Thyroid gland (tissue), 4 donors: ENCODE measurements at regions of chr19 and their contacts with region 1.

Region 1: GRCh38 chr19:46288896-46289588 is 7.8 kb upstream of the HIF3A start:
- DNase-seq: peak in 1 of 2 donors; percentile 19
- H3K4me3 ChIP-seq: no peak overlapping the region
- H3K27ac ChIP-seq: peak overlapping the region in 2 of 3 donors; percentile 10 to 40
- H3K4me1 ChIP-seq: no peaks in the 10 kb centered on the region
- H3K27me3 ChIP-seq: no peaks in the 10 kb centered on the region
- CTCF ChIP-seq: no peak
- POLR2A ChIP-seq: no peak

Region 2: GRCh38 chr19:46239193-46240024 is 49.6 kb before region 1 on chr19:
- intact Hi-C with region 1: no loop called
- DNase-seq: no peak
- H3K4me3 ChIP-seq: no peak overlapping the region
- H3K27ac ChIP-seq: no peak overlapping the region
- H3K4me1 ChIP-seq: no peaks in the 10 kb centered on the region
- H3K27me3 ChIP-seq: peaks cover 3% of the 10 kb centered on the region
- CTCF ChIP-seq: no peak
- POLR2A ChIP-seq: no peak

Region 3: DNA sequence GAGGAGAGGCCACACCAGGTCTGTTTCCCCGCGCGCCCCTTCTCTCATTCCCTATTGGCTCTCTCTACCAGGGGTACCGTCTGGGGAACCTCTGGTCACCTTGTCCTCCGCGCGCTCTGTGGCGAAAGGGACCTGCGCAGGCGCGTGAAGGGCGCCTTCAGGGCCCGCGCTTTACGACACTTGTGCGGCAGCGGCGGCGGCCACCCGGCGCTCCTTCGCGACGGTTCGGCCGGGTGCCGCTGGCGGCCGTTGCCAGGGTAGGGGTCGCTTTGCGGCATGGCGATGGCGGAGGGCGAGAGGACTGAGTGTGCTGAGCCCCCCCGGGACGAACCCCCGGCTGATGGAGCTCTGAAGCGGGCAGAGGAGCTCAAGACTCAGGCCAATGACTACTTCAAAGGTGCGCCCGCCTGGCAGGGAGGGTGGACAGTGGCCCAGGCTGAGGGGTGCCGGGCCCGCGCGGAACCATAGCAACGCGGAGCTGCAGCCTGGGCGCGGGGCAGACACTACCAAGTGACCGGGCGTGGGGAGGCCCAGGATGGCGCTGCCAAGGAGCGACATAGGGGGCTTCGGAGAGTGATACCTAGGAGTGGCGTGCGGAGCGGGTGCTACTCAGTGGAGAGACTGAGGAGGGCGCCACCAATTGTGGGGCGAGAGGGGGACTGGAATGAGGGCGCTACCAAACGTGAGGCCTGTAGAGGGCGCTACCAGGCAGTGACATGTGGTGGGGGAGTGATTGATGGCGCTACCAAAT is 58.0 kb after region 1 on chr19 and contains the start of gene PPP5C:
- intact Hi-C with region 1: loop called (anchors 10 kb)
- DNase-seq: peak; percentile 94
- H3K4me3 ChIP-seq: peak within 1 kb of the TSS; percentile 76 to 90 (median 85)
- H3K27ac ChIP-seq: peak within 1 kb of the TSS; percentile 53 to 90 (median 85)
- H3K4me1 ChIP-seq: peaks cover 45 to 51% of the 10 kb centered on the region in 2 donors
- H3K27me3 ChIP-seq: no peaks in the 10 kb centered on the region
- CTCF ChIP-seq: peak; percentile 33 to 83 (median 66)
- POLR2A ChIP-seq: peak in 1 of 2 donors; percentile 81
- total RNA-seq, gene PPP5C: 63.3 to 112 (median 80.7) TPM

Region 4: GRCh38 chr19:46392243-46392801 is 103.3 kb after region 1 on chr19:
- intact Hi-C with region 1: loop called (anchors 10 kb)
- DNase-seq: no peak
- H3K4me3 ChIP-seq: no peak overlapping the region
- H3K27ac ChIP-seq: no peak overlapping the region
- H3K4me1 ChIP-seq: no peaks in the 10 kb centered on the region
- H3K27me3 ChIP-seq: no peaks in the 10 kb centered on the region
- CTCF ChIP-seq: no peak
- POLR2A ChIP-seq: no peak

Region 5: GRCh38 chr19:46487802-46488445 is 198.9 kb after region 1 on chr19:
- intact Hi-C with region 1: loop called (anchors 10 kb)
- DNase-seq: peak; percentile 73 to 77
- H3K4me3 ChIP-seq: peak overlapping the region in 1 of 3 donors; percentile 1
- H3K27ac ChIP-seq: no peak overlapping the region
- H3K4me1 ChIP-seq: peaks cover 14 to 25% of the 10 kb centered on the region in 2 donors
- H3K27me3 ChIP-seq: peaks cover 12% of the 10 kb centered on the region
- CTCF ChIP-seq: peak; percentile 85 to 98 (median 96)
- POLR2A ChIP-seq: no peak